Breast epithelium (tissue), 4 donors: ENCODE measurements at regions of chr7 and their contacts with region 1.

Region 1: DNA sequence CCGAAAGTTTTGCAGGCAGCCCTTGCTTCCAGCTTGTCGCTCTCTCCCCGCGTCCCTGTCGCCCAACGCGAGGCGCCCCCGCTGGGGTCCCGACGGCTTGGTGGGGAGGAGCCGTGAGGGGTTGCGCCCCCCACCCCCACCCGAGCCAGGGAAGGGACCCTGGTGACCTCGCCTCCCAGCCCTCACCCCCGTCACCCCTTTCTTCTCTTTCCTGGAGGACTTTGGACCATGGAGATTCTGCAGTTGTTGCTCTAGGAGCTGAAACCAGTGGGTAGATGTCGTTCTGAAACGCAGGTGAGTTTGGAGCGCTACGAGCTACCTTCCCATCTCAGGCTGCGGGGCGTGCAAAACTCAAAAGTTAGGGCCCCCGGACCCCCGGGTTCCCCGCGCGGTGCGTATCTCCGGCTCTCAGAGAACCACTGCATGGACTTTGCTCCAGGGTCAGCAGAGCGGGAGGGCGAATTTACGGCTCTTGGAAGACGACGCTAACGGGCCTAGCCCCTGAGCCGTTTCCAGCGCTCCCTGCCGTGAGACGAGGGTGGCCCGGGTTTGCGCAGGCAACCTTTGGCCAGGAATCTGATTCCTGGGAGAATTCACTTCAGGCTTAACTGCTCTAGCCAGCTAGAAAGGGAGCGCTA is 684 bp upstream of the ATXN7L1 start:
- DNase-seq: no peak
- H3K4me3 ChIP-seq: peak overlapping the region; percentile 65 to 96 (median 78)
- H3K27ac ChIP-seq: peak overlapping the region in 1 of 2 donors; percentile 75
- H3K4me1 ChIP-seq: peaks cover 0 to 6% of the 10 kb centered on the region in 2 donors
- H3K27me3 ChIP-seq: no peaks in the 10 kb centered on the region
- CTCF ChIP-seq: no peak
- POLR2A ChIP-seq: no peak

Region 2: DNA sequence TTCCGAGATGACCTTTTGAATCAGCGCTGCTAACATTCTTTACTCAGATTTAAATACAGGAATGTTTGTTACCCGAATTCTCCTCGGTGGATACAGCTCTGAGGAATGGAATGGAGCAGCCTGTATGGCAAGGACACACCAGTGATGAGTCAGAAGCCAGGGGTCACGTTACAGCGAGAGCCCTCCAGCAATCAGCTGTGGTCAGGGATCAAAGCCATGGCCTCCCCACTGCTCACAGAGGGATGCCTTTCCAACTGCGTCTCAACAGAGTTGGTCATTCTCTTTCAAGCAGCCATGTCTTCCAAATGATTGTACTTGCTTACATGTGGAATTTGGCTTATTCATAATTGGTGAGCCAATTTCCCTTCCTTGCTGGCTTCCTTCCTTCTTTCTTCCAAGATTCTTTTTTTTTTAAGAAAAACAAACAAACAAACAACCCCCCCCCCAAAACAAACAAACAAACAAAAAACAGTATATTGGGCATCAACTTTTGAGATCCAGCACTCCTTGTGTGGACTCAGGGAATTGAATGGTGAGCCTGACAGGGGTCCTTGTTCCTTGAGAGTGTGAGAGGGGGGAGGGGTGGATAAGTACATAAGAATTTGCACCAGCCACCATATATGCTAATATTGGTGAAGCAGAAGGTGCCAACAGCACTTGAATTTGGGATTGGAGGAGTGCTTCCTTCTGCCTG is 100.9 kb before region 1 on chr7:
- intact Hi-C with region 1: no loop called
- DNase-seq: peak in 1 of 2 donors; percentile 21
- H3K4me3 ChIP-seq: no peak overlapping the region
- H3K27ac ChIP-seq: peak overlapping the region in 1 of 2 donors; percentile 37
- H3K4me1 ChIP-seq: no peaks in the 10 kb centered on the region
- H3K27me3 ChIP-seq: no peaks in the 10 kb centered on the region
- CTCF ChIP-seq: no peak
- POLR2A ChIP-seq: no peak

Region 3: GRCh38 chr7:105851064-105851463 is 26.0 kb before region 1 on chr7:
- intact Hi-C with region 1: loop called (anchors 1 kb)
- DNase-seq: no peak
- H3K4me3 ChIP-seq: no peak overlapping the region
- H3K27ac ChIP-seq: no peak overlapping the region
- H3K4me1 ChIP-seq: no peaks in the 10 kb centered on the region
- H3K27me3 ChIP-seq: no peaks in the 10 kb centered on the region
- CTCF ChIP-seq: no peak
- POLR2A ChIP-seq: no peak